Head of caudate nucleus (tissue), 42 donors: ENCODE measurements at regions of chr12 and their contacts with region 1.

Region 1: GRCh38 chr12:68745904-68746571 is at the start of gene SLC35E3:
- DNase-seq: peak; percentile 90 to 98 (median 96)

Region 2: DNA sequence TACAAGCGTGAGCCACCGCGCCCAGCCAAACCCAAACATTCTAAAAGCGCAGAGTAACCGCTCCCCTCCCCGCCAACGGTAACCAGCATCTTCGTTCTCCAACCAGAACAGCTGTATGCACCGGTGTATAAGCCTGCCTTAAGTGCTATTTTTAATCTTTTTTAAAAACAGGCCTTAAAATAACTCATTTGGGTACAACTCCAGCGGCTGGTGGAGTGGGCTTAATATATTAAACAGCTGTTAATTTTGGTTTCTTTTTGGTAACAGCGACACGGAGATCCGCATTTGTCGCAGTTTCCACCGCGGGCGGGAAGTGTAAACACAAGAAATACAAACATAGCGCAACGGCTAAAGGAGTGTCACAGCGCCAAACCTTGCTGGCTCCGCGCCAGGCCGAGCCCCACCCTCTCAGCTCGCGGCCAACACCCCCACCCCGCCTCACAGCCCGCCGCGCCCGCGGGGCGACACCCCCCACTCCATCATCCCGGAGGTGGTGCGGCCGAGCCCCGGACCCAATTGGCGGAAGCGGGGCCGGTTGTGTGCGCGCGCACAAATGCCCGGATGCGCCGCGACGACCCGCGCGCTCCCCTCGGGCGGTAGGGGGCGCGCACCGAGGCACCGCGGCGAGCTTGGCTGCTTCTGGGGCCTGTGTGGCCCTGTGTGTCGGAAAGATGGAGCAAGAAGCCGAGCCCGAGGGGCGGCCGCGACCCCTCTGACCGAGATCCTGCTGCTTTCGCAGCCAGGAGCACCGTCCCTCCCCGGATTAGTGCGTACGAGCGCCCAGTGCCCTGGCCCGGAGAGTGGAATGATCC is 61.7 kb after region 1 on chr12 and contains the start of gene MDM2:
- intact Hi-C with region 1: loop called (anchors 2 kb)
- DNase-seq: peak; percentile 69 to 95 (median 91)